MCF 10A (cell line): ENCODE measurements at regions of chr11 and their contacts with region 1.

Region 1: GRCh38 chr11:6812390-6813005 is 13.0 kb upstream of the OR6A2 start:
- DNase-seq: peak; percentile 64
- H3K4me3 Mint-ChIP-seq: no peak overlapping the region
- H3K27ac Mint-ChIP-seq: no peak overlapping the region
- H3K4me1 Mint-ChIP-seq: no peaks in the 10 kb centered on the region
- H3K27me3 Mint-ChIP-seq: peaks cover 22% of the 10 kb centered on the region
- CTCF ChIP-seq: peak; percentile 91

Region 2: DNA sequence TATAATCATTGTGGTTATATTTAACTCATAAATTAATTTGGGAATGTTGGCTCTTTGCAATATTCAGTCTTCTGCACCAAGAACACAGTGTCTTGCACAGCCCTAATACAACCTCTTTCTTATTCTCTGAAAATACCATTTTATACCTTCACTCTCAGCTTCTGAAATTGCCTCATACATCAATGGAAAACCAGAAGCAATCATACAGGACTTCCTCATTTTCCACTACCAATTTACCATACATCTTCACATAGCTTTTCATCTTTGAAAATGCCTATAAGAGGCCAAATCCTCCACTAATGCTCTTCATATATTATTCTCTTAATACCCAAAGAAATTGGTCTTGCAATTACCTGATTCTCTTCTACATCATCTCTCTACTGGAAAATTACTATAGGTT is 34.0 kb before region 1 on chr11:
- CTCF ChIA-PET with region 1: interaction called, 10 read pairs
- POLR2A ChIA-PET with region 1: no interaction called
- intact Hi-C with region 1: no loop called
- DNase-seq: no peak
- H3K4me3 Mint-ChIP-seq: no peak overlapping the region
- H3K27ac Mint-ChIP-seq: no peak overlapping the region
- H3K4me1 Mint-ChIP-seq: no peaks in the 10 kb centered on the region
- H3K27me3 Mint-ChIP-seq: peaks cover 19% of the 10 kb centered on the region
- CTCF ChIP-seq: no peak

Region 3: DNA sequence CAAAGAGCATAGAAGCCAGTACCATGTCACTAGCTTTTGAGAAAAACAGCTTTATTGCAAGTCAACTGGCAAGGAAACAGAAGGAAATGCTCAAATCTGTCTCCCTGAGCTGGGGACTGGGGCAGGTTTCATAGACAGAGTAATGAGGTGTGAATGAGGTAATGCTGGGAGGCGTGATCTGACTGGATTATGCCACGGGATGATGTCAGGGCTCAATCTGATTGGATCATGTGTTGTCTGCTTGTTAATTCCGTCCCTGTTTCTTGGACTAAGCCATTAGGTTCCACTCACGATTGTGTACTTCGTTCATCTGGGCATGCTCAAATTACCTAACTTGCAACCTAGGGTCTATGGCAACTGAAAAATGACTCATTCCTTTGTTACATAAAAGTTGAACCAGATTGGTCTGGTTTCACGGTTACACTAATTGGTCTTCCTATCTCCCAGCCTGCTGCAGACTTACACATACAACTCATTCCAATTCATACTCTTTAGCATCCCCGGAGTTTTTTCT is 12.8 kb after region 1 on chr11:
- CTCF ChIA-PET with region 1: interaction called, 45 read pairs
- POLR2A ChIA-PET with region 1: no interaction called
- intact Hi-C with region 1: no loop called
- DNase-seq: peak; percentile 54
- H3K4me3 Mint-ChIP-seq: no peak overlapping the region
- H3K27ac Mint-ChIP-seq: no peak overlapping the region
- H3K4me1 Mint-ChIP-seq: peaks cover 6% of the 10 kb centered on the region
- H3K27me3 Mint-ChIP-seq: no peaks in the 10 kb centered on the region
- CTCF ChIP-seq: no peak

Region 4: DNA sequence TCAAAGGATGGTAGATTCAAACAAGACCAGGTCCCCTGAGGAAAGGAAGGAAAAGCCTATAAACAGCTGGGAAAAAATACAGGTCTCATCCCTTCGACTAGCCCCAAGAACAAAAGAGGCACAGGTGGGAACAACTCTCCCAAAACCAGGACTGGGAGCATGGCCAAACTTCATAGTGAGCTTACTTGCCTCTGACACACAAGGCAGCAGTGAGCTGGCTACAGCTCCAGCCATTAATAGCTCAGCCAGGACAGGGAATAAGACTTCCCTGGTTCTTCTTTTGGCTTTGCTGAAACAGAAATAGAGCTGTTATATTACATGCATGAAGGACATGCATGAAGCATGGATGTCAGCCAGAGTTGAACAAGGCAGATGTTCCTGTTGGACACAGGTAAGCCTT is 50.5 kb after region 1 on chr11 and contains the start of gene OR10A2:
- CTCF ChIA-PET with region 1: interaction called, 22 read pairs
- POLR2A ChIA-PET with region 1: no interaction called
- intact Hi-C with region 1: no loop called
- DNase-seq: peak; percentile 30
- H3K4me3 Mint-ChIP-seq: no peak within 1 kb of the TSS
- H3K27ac Mint-ChIP-seq: no peak within 1 kb of the TSS
- H3K4me1 Mint-ChIP-seq: peaks cover 5% of the 10 kb centered on the region
- H3K27me3 Mint-ChIP-seq: no peaks in the 10 kb centered on the region
- CTCF ChIP-seq: no peak
- total RNA-seq, gene OR10A2: not detected in 2 replicates

Region 5: GRCh38 chr11:6962673-6963072 is 150.2 kb after region 1 on chr11:
- CTCF ChIA-PET with region 1: interaction called, 11 read pairs
- POLR2A ChIA-PET with region 1: no interaction called
- intact Hi-C with region 1: no loop called
- DNase-seq: no peak
- H3K4me3 Mint-ChIP-seq: no peak overlapping the region
- H3K27ac Mint-ChIP-seq: no peak overlapping the region
- H3K4me1 Mint-ChIP-seq: no peaks in the 10 kb centered on the region
- H3K27me3 Mint-ChIP-seq: no peaks in the 10 kb centered on the region
- CTCF ChIP-seq: no peak

Region 6: GRCh38 chr11:7251836-7252682 is 439.6 kb after region 1 on chr11 and contains the start of gene SYT9:
- CTCF ChIA-PET with region 1: no interaction called
- POLR2A ChIA-PET with region 1: no interaction called
- intact Hi-C with region 1: no loop called
- DNase-seq: no peak
- H3K4me3 Mint-ChIP-seq: no peak within 1 kb of the TSS
- H3K27ac Mint-ChIP-seq: no peak within 1 kb of the TSS
- H3K4me1 Mint-ChIP-seq: no peaks in the 10 kb centered on the region
- H3K27me3 Mint-ChIP-seq: peaks cover 17% of the 10 kb centered on the region
- CTCF ChIP-seq: no peak
- total RNA-seq, gene SYT9: not detected in 2 replicates

Region 7: GRCh38 chr11:7442588-7443215 is 630.2 kb after region 1 on chr11:
- CTCF ChIA-PET with region 1: interaction called, 3 read pairs
- POLR2A ChIA-PET with region 1: no interaction called
- intact Hi-C with region 1: loop called (anchors 1 kb)
- DNase-seq: peak; percentile 70
- H3K4me3 Mint-ChIP-seq: no peak overlapping the region
- H3K27ac Mint-ChIP-seq: no peak overlapping the region
- H3K4me1 Mint-ChIP-seq: peaks cover 5% of the 10 kb centered on the region
- H3K27me3 Mint-ChIP-seq: no peaks in the 10 kb centered on the region
- CTCF ChIP-seq: peak; percentile 86